ENCODE measurements at regions of chr17 and their contacts with region 1.

Region 1: GRCh38 chr17:63406689-63407330 is 39.3 kb downstream of the CYB561 start:
- DNase-seq: peak; percentile 84
- ATAC-seq: peak; percentile 89
- H3K4me3 Mint-ChIP-seq: no peak overlapping the region
- H3K27ac Mint-ChIP-seq: no peak overlapping the region
- H3K4me1 Mint-ChIP-seq: peaks cover 5% of the 10 kb centered on the region
- H3K27me3 Mint-ChIP-seq: no peaks in the 10 kb centered on the region

Region 2: GRCh38 chr17:62671583-62672312 is 735.1 kb before region 1 on chr17:
- CTCF ChIA-PET with region 1: interaction called, 19 read pairs
- DNase-seq: no peak
- ATAC-seq: no peak
- H3K4me3 Mint-ChIP-seq: no peak overlapping the region
- H3K27ac Mint-ChIP-seq: no peak overlapping the region
- H3K4me1 Mint-ChIP-seq: no peaks in the 10 kb centered on the region
- H3K27me3 Mint-ChIP-seq: no peaks in the 10 kb centered on the region

Region 3: GRCh38 chr17:63082273-63082993 is 324.4 kb before region 1 on chr17:
- CTCF ChIA-PET with region 1: interaction called, 34 read pairs
- DNase-seq: no peak
- ATAC-seq: no peak
- H3K4me3 Mint-ChIP-seq: no peak overlapping the region
- H3K27ac Mint-ChIP-seq: no peak overlapping the region
- H3K4me1 Mint-ChIP-seq: no peaks in the 10 kb centered on the region
- H3K27me3 Mint-ChIP-seq: no peaks in the 10 kb centered on the region

Region 4: GRCh38 chr17:63356337-63356757 is 50.5 kb before region 1 on chr17:
- CTCF ChIA-PET with region 1: no interaction called
- DNase-seq: no peak
- ATAC-seq: no peak
- H3K4me3 Mint-ChIP-seq: no peak overlapping the region
- H3K27ac Mint-ChIP-seq: no peak overlapping the region
- H3K4me1 Mint-ChIP-seq: no peaks in the 10 kb centered on the region
- H3K27me3 Mint-ChIP-seq: no peaks in the 10 kb centered on the region

Region 5: DNA sequence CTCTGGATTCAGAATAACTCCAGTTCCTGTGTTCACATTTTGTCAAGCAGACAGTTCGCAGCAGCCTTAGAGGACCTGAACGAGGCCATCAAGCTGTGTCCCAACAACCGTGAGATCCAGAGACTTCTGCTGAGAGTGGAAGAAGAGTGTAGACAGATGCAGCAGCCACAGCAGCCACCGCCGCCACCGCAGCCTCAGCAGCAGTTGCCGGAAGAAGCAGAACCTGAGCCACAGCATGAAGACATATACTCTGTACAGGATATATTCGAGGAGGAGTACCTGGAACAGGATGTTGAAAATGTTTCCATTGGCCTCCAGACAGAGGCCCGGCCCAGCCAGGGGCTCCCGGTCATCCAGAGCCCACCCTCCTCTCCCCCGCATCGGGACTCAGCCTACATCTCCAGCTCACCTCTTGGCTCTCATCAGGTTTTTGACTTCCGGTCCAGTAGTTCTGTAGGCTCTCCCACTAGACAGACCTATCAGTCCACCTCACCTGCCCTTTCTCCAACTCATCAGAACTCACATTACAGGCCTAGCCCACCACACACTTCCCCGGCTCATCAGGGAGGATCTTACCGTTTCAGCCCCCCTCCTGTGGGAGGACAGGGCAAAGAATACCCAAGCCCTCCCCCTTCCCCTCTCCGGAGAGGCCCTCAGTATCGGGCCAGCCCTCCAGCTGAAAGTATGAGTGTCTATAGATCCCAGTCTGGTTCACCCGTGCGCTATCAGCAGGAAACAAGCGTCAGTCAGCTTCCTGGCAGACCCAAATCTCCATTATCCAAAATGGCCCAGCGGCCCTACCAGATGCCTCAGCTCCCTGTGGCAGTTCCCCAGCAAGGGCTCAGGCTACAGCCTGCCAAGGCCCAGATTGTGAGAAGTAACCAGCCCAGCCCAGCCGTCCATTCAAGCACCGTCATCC is 13.4 kb after region 1 on chr17:
- CTCF ChIA-PET with region 1: interaction called, 45 read pairs
- DNase-seq: peak; percentile 85
- ATAC-seq: peak; percentile 87
- H3K4me3 Mint-ChIP-seq: peak overlapping the region; percentile 8
- H3K27ac Mint-ChIP-seq: peak overlapping the region; percentile 77
- H3K4me1 Mint-ChIP-seq: peaks cover 23% of the 10 kb centered on the region
- H3K27me3 Mint-ChIP-seq: no peaks in the 10 kb centered on the region

Region 6: GRCh38 chr17:63434876-63435684 is 28.3 kb after region 1 on chr17:
- CTCF ChIA-PET with region 1: interaction called, 16 read pairs
- DNase-seq: peak; percentile 91
- ATAC-seq: peak; percentile 93
- H3K4me3 Mint-ChIP-seq: peak overlapping the region; percentile 56
- H3K27ac Mint-ChIP-seq: peak overlapping the region; percentile 97
- H3K4me1 Mint-ChIP-seq: peaks cover 62% of the 10 kb centered on the region
- H3K27me3 Mint-ChIP-seq: no peaks in the 10 kb centered on the region

Region 7: GRCh38 chr17:63611354-63611753 is 204.5 kb after region 1 on chr17:
- CTCF ChIA-PET with region 1: interaction called, 16 read pairs
- DNase-seq: peak; percentile 50
- ATAC-seq: peak; percentile 56
- H3K4me3 Mint-ChIP-seq: peak overlapping the region; percentile 8
- H3K27ac Mint-ChIP-seq: peak overlapping the region; percentile 91
- H3K4me1 Mint-ChIP-seq: peaks cover 26% of the 10 kb centered on the region
- H3K27me3 Mint-ChIP-seq: no peaks in the 10 kb centered on the region

Region 8: DNA sequence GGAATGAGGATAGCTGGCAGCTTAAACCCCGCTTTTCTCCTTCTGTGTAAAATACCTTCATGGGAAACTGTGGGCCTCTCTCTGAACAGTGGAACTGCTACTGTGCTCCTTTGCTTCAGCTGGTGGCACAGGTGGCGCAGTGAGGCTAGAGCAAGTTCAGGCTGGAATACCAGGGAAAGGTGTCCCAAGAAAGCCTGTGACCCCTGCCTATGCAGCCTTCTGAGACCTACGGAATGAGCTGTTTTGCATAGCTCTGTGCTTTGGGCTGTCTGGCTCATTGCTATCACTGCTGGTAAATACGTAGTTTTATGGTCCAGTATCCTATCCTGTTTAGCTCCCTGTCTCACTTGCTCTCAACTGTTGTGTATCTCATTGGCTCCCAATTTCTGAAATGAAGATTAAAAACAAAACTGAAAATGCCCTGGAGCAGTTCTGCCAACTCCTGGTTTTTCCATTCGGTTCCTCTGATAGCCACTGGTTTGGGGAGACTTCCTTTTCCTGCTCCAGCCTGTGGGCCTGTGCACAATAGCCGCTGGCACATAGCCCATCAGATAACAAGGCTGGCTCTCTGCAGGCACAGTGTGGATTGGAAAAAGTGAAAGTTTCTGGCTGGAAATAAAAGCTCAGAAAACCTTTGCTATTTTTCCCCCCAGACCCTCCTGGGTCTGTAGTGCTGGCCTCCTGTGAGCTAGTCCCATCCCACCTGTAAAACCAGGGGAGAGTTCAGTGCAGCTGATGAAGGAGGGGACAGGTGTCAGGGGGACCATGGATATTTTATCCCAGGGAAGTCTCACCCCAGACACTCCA is 269.0 kb after region 1 on chr17:
- CTCF ChIA-PET with region 1: no interaction called
- DNase-seq: no peak
- ATAC-seq: peak; percentile 9
- H3K4me3 Mint-ChIP-seq: no peak overlapping the region
- H3K27ac Mint-ChIP-seq: no peak overlapping the region
- H3K4me1 Mint-ChIP-seq: no peaks in the 10 kb centered on the region
- H3K27me3 Mint-ChIP-seq: no peaks in the 10 kb centered on the region

Measured in activated CD8-positive, alpha-beta memory T cell treated with anti-CD3 and anti-CD28 coated beads, Interleukin-2, amount 10 ng/mL, durations not matched to agents 7 days and 5 days (primary cell).